HAP-1 (cell line): ENCODE measurements at regions of chr17 and their contacts with region 1.

Region 1: DNA sequence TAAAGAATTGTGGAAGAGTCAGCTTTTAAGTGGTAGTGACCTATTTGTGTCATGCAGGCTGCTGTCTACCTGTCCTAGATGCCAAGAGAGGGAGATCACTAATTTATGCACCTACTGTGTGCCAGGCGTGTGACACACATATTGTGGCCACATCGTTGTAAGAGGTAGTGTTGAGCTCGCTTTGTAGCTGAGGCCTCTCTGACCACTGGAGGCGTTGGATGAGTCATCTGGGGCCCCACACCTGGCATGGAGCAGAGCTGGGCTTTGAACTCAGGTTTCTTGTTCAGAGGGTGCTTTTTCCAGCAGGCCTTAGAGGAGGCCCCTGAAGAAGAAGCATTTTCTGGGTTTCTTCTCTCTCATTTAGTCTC is 52.3 kb upstream of the LGALS9 start:
- DNase-seq: no peak
- H3K4me3 ChIP-seq: no peak overlapping the region
- H3K4me1 ChIP-seq: peaks cover 20% of the 10 kb centered on the region
- H3K27me3 ChIP-seq: no peaks in the 10 kb centered on the region

Region 2: DNA sequence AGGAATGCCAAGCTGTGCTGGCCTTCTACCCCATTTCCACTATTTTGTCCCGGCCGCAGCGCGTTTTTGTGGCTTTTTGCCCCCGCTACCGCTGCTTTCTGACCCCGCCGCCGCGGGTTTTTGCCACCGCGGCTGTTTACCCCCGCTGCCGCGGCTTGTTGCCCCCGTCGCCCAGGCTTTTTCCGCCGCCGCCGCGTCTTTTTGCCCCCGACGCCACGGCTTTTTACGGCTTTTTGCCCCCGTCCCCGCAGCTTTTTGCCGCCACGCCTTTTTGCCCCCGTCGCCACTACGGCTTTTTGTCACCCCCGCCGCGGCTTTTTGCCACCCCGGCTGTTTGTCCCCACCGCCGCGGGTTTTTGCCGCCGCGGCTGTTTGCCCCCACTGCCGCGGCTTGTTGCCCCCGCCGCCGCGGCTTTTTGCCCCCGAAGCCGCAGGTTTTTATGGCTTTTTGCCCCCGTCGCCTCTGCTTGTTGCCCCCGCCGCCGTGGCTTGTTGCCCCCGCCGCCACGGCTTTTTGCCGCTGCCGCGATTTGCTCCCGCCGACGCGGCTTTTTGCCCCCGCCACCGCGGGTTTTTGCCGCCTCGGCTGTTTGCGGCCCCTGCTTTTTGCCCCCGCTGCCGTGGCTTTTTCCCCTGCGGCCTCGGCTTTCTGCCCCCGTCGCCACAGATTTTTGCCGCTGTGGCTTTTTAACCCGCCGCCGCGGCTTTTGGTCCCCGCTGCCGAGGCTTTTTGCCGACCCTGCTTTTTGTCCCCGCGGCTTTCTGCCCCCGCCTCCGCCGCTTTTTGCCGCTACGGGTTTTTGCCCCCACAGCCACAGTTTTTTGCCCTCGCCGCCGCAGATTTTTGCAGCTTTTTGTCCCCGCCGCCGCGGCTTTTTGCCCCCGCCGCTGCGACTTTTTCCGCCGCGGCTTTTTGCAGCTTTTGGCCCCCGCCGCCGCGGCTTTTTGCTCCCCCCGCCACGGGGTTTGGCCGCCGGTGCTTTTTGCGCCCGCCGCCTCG is 805.2 kb before region 1 on chr17:
- in situ Hi-C with region 1: no loop called
- DNase-seq: no peak
- H3K4me3 ChIP-seq: no peak overlapping the region
- H3K4me1 ChIP-seq: no peaks in the 10 kb centered on the region
- H3K27me3 ChIP-seq: no peaks in the 10 kb centered on the region

Region 3: DNA sequence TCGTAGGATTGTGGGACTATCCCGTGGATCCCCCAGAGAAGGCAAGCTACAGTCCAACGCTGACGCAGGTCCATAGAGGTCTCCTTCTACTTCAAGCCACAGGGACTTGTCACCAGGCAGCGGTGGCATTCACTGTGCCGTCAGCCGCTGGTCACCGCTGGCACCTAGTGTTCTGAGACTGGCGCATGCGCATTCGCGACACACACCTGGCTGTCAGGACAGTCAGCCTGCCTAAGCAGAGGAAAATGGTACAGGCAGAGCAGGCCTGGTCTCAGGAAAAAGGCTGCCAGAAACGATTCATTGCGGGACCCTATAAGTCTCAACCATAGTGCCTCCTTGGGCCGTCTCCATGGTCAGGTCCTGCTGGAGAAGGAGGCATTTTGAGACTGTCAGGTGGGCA is 422.8 kb before region 1 on chr17:
- in situ Hi-C with region 1: no loop called
- DNase-seq: no peak
- H3K4me3 ChIP-seq: no peak overlapping the region
- H3K4me1 ChIP-seq: no peaks in the 10 kb centered on the region
- H3K27me3 ChIP-seq: no peaks in the 10 kb centered on the region

Region 4: DNA sequence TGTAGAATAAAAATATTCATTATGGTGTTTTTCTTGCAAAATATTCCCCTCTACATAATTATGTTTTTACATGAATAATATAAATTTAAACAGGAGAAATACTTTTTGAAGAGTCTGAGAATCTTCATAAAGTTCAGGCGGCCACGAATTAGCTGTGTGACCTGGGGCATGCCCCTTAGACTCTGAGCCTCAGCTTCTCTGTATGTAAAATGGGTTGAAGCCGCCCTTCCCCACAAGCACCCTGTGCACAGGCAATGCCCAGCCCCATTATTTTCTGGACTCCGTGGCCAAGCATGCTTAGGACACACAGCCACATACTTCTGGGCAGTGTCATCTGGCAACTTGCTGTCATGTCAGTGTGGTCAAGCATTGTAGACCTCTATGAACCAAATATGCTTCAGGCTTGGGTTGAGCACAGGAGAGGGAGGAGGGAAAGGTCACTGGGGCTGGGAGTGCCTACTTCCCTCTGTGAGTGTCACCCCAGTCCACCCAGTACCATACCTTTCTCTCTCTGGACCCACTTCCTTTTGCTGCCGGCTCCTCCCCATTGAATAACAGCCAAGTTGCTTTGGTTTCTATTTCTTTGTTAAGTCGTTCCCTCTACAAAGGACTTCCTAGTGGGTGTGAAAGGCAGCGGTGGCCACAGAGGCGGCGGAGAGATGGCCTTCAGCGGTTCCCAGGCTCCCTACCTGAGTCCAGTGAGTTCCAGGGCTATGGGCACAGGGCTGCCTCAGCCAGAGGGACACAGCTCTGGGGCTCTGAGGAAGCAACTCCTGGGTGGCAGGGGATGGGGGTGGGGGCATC is 52.1 kb after region 1 on chr17 and contains the start of gene LGALS9:
- in situ Hi-C with region 1: loop called (anchors 10 kb)
- DNase-seq: no peak
- H3K4me3 ChIP-seq: no peak within 1 kb of the TSS
- H3K4me1 ChIP-seq: no peaks in the 10 kb centered on the region
- H3K27me3 ChIP-seq: no peaks in the 10 kb centered on the region

Region 5: DNA sequence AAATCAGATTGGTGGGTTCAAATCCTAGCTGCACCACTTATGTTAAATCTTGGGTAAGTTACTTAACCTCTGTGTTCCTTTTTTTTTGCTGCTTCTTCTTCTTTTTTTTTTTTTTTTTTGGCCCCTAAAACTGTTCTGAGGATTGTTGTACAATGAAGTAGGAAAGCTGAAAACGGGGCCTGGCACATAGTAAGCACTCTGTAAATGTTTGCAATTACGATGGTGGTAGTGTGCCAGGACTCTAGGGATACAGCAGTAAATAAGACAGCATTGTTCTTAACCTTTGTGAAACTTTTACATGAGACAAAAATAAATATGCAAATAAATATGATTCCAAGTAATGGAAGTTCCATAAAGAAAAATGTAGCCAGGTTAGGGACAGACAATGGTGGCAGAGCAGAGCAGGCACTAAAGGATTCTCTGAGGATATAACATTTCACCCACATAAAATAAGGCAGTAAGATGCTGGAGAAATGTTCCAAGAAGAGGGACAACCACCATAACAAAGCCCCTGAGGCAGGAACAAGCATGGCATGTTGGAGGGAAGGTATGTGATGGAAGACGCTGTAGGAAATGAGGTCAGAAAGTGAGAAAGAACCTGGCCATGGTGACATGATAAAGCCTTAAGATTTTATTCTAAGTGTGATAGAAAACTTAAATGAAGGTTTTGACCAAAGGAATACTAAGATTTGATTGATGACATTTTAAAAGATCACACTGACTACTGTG is 591.1 kb after region 1 on chr17:
- in situ Hi-C with region 1: no loop called
- DNase-seq: no peak
- H3K4me3 ChIP-seq: no peak overlapping the region
- H3K4me1 ChIP-seq: peaks cover 25% of the 10 kb centered on the region
- H3K27me3 ChIP-seq: no peaks in the 10 kb centered on the region